HepG2 (cell line): ENCODE measurements at regions of chr1 and their contacts with region 1.

Region 1: GRCh38 chr1:212229654-212230053 is 55.6 kb upstream of the PPP2R5A start:
- DNase-seq: no peak
- ATAC-seq: no peak
- H3K4me3 ChIP-seq: no peak overlapping the region
- H3K27ac ChIP-seq: no peak overlapping the region
- H3K4me1 ChIP-seq: peaks cover 74% of the 10 kb centered on the region
- H3K27me3 ChIP-seq: no peaks in the 10 kb centered on the region; a peak in 1 of 5 replicates
- CTCF ChIP-seq: no peak
- EP300 ChIP-seq: no peak
- POLR2A ChIP-seq: no peak
- RAD21 ChIP-seq: no peak

Region 2: DNA sequence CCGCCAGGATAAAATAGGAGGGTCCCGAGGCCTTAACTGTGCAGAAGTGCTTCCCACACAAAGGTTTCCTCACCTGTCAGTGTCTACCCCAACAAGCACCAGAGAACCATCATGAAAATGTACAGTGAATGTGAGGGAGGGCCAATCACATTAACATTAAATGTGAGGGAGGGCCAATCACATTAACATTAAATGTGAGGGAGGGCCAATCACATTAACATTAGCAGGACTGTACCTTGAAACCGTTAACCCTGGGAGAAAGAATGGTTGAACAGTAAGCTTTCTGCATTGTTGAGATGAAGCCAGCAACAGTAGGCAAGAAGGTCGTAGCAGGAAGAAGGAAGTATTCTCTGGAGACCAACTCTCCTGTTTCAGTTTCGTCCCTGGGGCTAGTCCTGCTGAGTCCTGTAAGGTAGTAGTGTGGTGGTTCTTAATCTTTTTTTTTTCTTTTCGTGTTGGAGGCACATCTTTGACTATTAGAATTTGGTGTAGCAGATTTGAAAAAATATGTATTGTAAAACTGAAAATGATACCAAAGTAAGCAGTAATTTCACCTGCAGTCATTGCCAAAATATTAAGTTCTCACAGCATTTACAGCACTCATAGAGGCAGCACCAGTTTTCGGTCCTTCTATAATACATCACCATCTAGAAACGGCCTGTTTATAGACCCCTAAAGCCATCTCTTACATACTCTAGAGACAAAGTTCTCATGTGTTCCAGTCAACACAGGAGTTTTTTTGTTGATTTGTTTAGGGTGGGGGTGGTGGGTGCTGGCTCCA is 43.0 kb before region 1 on chr1:
- CTCF ChIA-PET with region 1: no interaction called
- POLR2A ChIA-PET with region 1: no interaction called
- in situ Hi-C with region 1: no loop called
- intact Hi-C with region 1: no loop called
- DNase-seq: no peak
- ATAC-seq: no peak; the same call in 2 of the 3 replicates
- H3K4me3 ChIP-seq: no peak overlapping the region
- H3K27ac ChIP-seq: no peak overlapping the region
- H3K4me1 ChIP-seq: peaks cover 6% of the 10 kb centered on the region; the same call in 1 of the 2 replicates
- H3K27me3 ChIP-seq: no peaks in the 10 kb centered on the region
- CTCF ChIP-seq: no peak
- EP300 ChIP-seq: no peak
- POLR2A ChIP-seq: no peak
- RAD21 ChIP-seq: no peak

Region 3: DNA sequence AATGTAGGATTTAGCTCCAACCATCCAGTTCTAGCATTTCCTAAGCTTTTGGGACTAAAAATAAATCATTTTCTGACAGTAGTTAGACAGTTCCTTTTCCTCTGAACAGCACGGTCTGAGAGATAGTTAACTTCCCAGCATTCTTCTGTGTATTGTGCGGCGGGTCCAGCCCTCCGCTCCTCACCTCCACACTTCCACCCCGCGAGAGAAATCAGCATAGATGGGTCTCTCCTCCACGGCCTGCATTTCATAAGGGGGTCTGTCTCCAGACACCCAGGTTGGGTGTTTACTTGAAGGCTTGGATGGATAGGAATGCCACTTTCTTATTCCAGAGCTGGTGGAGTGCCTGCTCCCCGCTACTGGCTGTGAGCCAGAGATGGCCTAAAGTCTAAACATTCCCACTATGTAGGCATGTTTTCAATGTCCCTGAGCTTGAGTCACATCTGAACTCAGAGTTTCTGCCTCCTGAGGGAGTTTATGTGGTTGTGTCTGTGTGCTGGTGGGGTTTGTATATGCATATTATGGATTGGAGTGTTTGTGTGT is 17.6 kb after region 1 on chr1:
- CTCF ChIA-PET with region 1: no interaction called
- POLR2A ChIA-PET with region 1: interaction called, 11 read pairs
- in situ Hi-C with region 1: no loop called
- intact Hi-C with region 1: no loop called
- DNase-seq: peak; percentile 63
- ATAC-seq: peak; percentile 80
- H3K4me3 ChIP-seq: peak overlapping the region; percentile 35 to 60 (median 48); a peak in 4 of 6 replicates
- H3K27ac ChIP-seq: no peak overlapping the region
- H3K4me1 ChIP-seq: peaks cover 72% of the 10 kb centered on the region
- H3K27me3 ChIP-seq: peaks cover 0 to 2% of the 10 kb centered on the region in 2 experiments; a peak in 1 of 5 replicates
- CTCF ChIP-seq: no peak
- EP300 ChIP-seq: no peak
- POLR2A ChIP-seq: no peak
- RAD21 ChIP-seq: no peak

Region 4: DNA sequence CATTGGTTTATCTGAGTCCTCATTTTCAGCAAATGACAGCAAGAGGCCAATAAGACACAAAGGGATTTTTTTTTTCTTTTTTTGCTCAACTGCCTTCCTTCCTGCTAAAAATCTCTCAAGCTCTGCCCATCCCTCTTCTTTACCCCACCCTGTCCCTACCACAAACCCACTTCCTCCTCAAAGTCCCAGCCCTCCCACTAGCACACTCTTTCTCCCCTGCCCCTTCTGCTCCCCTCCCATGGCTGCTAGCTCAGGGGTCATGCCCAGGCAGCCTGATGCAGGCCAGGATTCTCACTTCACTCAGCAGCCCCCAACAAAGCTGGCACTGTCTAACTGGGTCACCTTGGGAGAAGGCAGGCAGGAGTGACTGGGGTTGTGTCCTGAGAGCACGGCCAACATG is 26.7 kb after region 1 on chr1:
- CTCF ChIA-PET with region 1: no interaction called
- POLR2A ChIA-PET with region 1: interaction called, 17 read pairs
- in situ Hi-C with region 1: no loop called
- intact Hi-C with region 1: no loop called
- DNase-seq: no peak
- ATAC-seq: no peak
- H3K4me3 ChIP-seq: peak overlapping the region in 2 of 3 experiments; percentile 20 to 59; a peak in 3 of 6 replicates
- H3K27ac ChIP-seq: peak overlapping the region; percentile 82
- H3K4me1 ChIP-seq: peaks cover 88% of the 10 kb centered on the region
- H3K27me3 ChIP-seq: no peaks in the 10 kb centered on the region
- CTCF ChIP-seq: no peak
- EP300 ChIP-seq: no peak
- POLR2A ChIP-seq: no peak
- RAD21 ChIP-seq: no peak

Region 5: GRCh38 chr1:212271823-212272485 is 42.3 kb after region 1 on chr1:
- CTCF ChIA-PET with region 1: no interaction called
- POLR2A ChIA-PET with region 1: no interaction called
- in situ Hi-C with region 1: no loop called
- intact Hi-C with region 1: loop called (anchors 5 kb)
- DNase-seq: no peak
- ATAC-seq: peak; percentile 76
- H3K4me3 ChIP-seq: no peak overlapping the region; a peak in 1 of 6 replicates
- H3K27ac ChIP-seq: no peak overlapping the region
- H3K4me1 ChIP-seq: peaks cover 18% of the 10 kb centered on the region
- H3K27me3 ChIP-seq: peaks cover 0 to 3% of the 10 kb centered on the region in 2 experiments; a peak in 1 of 5 replicates
- CTCF ChIP-seq: no peak
- EP300 ChIP-seq: no peak
- POLR2A ChIP-seq: no peak
- RAD21 ChIP-seq: no peak

Region 6: GRCh38 chr1:212284744-212285684 is 55.4 kb after region 1 on chr1 and contains the start of gene PPP2R5A:
- CTCF ChIA-PET with region 1: no interaction called
- POLR2A ChIA-PET with region 1: interaction called, 9 read pairs
- in situ Hi-C with region 1: no loop called
- intact Hi-C with region 1: loop called (anchors 5 kb)
- DNase-seq: peak; percentile 97
- ATAC-seq: peak; percentile 93
- H3K4me3 ChIP-seq: peak within 1 kb of the TSS; percentile 85 to 98 (median 96)
- H3K27ac ChIP-seq: peak within 1 kb of the TSS; percentile 91
- H3K4me1 ChIP-seq: peaks cover 32% of the 10 kb centered on the region
- H3K27me3 ChIP-seq: no peaks in the 10 kb centered on the region; a peak in 1 of 5 replicates
- CTCF ChIP-seq: peak; percentile 85
- EP300 ChIP-seq: 0 out of 4 replicates have a peak, but pooled peaks of 1 of the 2 experiments have one; percentile 9
- POLR2A ChIP-seq: peak; percentile 71 to 72
- RAD21 ChIP-seq: peak; percentile 66; the same call in 1 of the 2 replicates
- total RNA-seq, gene PPP2R5A: 22.0 and 26.5 TPM in 2 replicates

Region 7: DNA sequence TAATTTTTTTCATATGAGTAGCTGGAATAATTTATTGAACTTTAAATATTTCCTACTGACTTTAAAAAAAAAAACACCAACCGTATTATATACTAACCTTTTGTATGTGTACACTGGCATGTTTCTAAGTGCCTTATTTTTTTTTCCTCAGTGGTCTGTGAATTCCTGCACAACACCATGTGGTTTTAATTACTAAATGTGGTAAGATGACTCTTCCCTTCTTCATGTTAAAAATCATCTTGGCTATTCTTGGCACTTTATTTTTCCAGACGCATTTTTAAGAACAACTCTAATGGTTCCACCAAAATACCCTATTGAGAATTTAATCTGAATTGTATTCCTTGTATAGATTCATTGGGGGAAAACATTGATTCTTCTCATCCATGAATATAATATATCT is 84.0 kb after region 1 on chr1:
- CTCF ChIA-PET with region 1: no interaction called
- POLR2A ChIA-PET with region 1: no interaction called
- in situ Hi-C with region 1: no loop called
- intact Hi-C with region 1: no loop called
- DNase-seq: no peak
- ATAC-seq: no peak
- H3K4me3 ChIP-seq: no peak overlapping the region
- H3K27ac ChIP-seq: no peak overlapping the region
- H3K4me1 ChIP-seq: peaks cover 17% of the 10 kb centered on the region
- H3K27me3 ChIP-seq: no peaks in the 10 kb centered on the region; a peak in 1 of 5 replicates
- CTCF ChIP-seq: no peak
- EP300 ChIP-seq: no peak
- POLR2A ChIP-seq: no peak
- RAD21 ChIP-seq: no peak